A673 (cell line): ENCODE measurements at regions of chr1 and their contacts with region 1.

Region 1: DNA sequence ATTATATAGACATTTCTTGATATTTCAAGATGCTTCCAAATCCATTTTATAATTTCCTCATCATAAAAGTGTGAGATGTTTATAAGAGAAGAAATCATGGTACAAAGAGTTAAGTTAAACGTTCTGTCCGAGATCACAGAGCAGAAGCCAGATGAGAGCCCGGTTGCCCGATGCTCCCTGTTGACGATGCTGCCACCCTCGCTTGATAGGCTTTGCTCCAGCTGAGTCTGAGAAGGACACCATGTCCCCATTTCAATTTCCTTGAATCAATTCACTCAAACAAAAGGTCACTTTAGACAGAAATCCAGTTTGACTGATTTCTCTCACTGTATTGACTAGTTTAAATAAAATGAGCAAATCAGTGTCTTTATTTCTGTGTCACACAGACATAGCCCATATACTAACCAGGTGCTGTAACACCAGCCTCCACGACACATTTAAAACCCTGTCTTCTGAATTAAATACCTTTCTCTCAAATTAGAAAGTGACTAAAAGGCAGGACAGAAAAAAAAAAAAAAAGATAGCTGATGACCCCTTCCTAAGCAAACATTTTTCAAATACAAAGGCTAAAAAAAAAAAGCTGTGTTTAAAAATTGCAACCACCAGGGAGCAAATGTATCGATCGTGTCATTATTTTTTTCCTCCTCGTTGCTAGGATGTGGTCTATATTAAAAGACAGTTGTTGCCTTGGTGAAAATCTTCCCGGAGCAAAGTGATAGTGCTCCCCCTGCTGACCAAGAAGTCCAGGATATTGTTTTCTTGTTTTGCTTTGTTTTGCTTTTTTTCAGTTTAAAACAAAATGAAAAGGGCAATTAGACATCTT is 35.2 kb downstream of the DNASE2B start:
- DNase-seq: peak; percentile 81
- H3K4me3 ChIP-seq: peak overlapping the region; percentile 13
- H3K27ac ChIP-seq: no peak overlapping the region
- H3K4me1 ChIP-seq: no peaks in the 10 kb centered on the region
- H3K27me3 ChIP-seq: no peaks in the 10 kb centered on the region
- CTCF ChIP-seq: peak; percentile 86

Region 2: GRCh38 chr1:83905315-83905907 is 528.1 kb before region 1 on chr1:
- CTCF ChIA-PET with region 1: no interaction called
- POLR2A ChIA-PET with region 1: no interaction called
- intact Hi-C with region 1: loop called (anchors 5 kb)
- DNase-seq: peak; percentile 50
- H3K4me3 ChIP-seq: no peak overlapping the region
- H3K27ac ChIP-seq: no peak overlapping the region
- H3K4me1 ChIP-seq: no peaks in the 10 kb centered on the region
- H3K27me3 ChIP-seq: no peaks in the 10 kb centered on the region
- CTCF ChIP-seq: peak; percentile 67

Region 3: DNA sequence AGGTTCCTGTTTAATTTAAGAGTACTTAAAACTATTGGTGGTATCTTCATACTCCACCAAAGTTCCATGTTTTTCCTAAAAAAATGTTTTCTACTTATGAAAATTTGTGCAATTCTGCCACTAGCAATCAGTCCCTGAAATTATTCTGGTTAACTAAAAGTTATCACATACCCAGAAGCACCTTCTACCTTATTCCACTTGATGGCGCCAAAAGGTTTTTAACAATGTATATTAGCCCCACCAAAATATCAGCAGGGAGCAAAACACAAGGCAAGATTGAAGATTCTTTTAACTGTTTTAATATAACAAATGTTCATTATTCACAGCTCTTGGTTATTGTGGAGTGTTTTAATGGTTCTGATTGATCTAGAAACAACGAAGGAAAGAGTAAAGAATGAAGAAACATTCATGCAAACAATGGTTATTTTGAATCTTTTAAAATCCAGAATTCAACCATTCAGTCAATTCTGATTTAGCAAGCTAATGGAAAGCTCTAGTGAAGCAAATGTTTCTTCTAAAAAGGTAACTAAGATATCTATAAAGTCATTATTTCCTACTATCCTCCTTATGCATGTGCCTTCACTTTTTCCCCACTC is 501.7 kb before region 1 on chr1:
- CTCF ChIA-PET with region 1: no interaction called
- POLR2A ChIA-PET with region 1: no interaction called
- intact Hi-C with region 1: loop called (anchors 5 kb)
- DNase-seq: peak; percentile 75
- H3K4me3 ChIP-seq: no peak overlapping the region
- H3K27ac ChIP-seq: no peak overlapping the region
- H3K4me1 ChIP-seq: peaks cover 18% of the 10 kb centered on the region
- H3K27me3 ChIP-seq: no peaks in the 10 kb centered on the region
- CTCF ChIP-seq: peak; percentile 79

Region 4: DNA sequence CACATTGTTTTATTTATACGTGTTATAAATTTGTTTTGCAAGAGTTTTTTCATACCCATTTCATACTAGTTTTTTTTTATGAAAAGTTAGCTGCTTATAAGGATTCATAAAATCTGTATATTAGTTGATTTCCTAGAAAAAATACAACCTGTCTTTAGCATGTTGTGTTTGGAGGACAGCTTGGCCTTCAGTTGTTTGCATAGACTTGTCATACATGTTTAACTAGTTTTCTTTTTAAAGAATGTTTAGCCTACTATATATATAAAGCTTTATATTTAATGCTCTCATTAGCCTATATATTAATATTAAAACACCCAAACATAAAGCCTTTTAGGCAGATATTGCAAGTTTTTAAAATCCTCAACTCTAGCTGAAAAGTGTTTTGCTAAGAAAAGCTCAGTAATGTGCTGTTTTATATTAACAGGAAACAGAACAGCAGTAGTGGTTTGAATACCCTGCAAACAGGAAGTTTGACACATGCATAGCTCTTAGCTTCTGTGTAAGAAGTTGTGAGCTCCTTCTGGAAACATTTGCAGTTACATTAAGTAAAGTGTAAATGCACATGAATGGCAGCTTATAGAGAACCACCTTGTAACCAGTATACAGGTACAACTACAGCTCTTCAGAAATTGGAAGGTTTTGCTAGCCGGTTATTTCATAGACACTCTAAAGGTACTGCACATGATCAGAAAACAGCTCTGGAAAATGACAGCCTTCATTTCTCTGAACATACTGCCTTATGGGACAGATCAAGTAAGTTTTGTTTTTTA is 289.5 kb before region 1 on chr1 and contains the start of gene PRKACB:
- CTCF ChIA-PET with region 1: interaction called, 3 read pairs
- POLR2A ChIA-PET with region 1: no interaction called
- intact Hi-C with region 1: loop called (anchors 1 kb)
- DNase-seq: peak; percentile 72
- H3K4me3 ChIP-seq: peak within 1 kb of the TSS; percentile 3
- H3K27ac ChIP-seq: peak within 1 kb of the TSS; percentile 56
- H3K4me1 ChIP-seq: peaks cover 17% of the 10 kb centered on the region
- H3K27me3 ChIP-seq: no peaks in the 10 kb centered on the region
- CTCF ChIP-seq: no peak
- total RNA-seq, gene PRKACB: 33.6 and 39.6 TPM in 2 replicates

Region 5: GRCh38 chr1:84286071-84286470 is 147.4 kb before region 1 on chr1:
- CTCF ChIA-PET with region 1: no interaction called
- POLR2A ChIA-PET with region 1: no interaction called
- intact Hi-C with region 1: no loop called
- DNase-seq: no peak
- H3K4me3 ChIP-seq: no peak overlapping the region
- H3K27ac ChIP-seq: no peak overlapping the region
- H3K4me1 ChIP-seq: no peaks in the 10 kb centered on the region
- H3K27me3 ChIP-seq: no peaks in the 10 kb centered on the region
- CTCF ChIP-seq: no peak

Region 6: GRCh38 chr1:84298328-84298683 is 135.2 kb before region 1 on chr1:
- CTCF ChIA-PET with region 1: no interaction called
- POLR2A ChIA-PET with region 1: no interaction called
- intact Hi-C with region 1: loop called (anchors 5 kb)
- DNase-seq: peak; percentile 68
- H3K4me3 ChIP-seq: peak overlapping the region; percentile 74
- H3K27ac ChIP-seq: peak overlapping the region; percentile 79
- H3K4me1 ChIP-seq: peaks cover 32% of the 10 kb centered on the region
- H3K27me3 ChIP-seq: no peaks in the 10 kb centered on the region
- CTCF ChIP-seq: no peak